ENCODE measurements at regions of chr7 and their contacts with region 1.

Region 1: DNA sequence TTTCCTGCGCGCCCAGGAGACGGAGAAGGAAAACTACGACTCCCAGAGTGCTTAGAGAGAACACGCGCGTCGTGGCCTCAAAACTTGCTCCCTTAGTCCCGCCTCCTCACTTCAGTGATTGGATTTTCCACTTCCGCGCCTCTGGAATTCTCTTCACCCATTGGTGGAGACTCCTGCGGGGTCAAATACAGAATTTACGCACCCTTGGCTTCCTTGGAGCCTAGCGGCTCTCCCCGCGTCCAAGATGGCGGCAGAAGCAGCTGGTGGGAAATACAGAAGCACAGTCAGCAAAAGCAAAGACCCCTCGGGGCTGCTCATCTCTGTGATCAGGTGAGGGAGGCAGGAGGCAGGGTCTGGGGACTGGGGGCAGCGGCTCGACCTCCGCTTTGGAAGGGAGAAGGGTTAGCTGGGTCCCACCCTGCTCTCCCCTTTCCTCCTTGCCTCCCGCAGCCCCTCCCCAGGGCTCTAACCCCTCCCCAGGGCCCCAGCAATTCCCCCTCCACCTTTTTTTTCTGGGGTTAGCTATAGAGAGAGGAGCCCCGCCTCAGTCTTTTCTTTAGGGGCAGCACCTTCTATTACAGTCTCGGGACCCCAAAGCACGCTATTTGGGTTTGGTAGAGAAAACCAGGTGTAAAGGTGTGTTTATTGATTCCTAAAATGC is at the start of gene EXOC4:
- DNase-seq: peak; percentile 85 to 99 (median 92)

Region 2: DNA sequence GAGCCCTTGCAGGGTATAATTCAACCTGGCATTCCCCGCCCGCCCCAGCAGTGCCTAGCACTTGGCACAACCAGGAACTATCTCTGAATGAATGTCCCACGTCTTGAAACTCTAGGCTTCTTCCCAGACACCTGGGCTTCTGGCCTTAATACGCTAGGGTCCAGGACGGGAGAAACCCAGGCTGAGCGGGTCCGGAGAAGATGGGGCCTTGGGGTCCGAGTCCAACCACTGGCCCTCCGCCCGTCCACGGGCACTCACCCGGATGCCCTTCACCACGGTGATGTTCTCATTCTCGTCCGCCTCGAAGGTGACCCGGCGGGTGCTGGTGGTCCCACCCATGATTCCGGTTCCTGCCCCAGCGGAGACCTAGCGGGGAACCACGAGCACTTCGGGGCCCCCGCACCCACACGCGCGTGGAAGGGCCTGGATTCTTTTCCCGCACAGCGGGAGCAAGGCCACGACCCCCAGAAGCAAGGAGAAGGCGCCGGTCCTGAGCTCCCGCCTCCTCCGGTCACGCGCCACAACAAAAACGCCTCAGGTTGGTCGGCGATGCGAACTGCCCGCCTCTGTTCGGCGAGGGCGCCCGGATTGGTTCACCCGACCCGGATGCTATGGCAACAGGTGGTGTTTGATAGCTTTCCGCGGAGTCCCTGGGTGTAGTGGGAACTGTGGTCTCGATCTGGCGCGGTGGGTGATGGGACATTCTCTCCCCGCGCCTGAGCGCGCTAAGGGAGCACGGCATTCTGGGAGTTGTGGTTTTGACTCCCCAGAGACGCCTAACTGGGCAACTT is 171.2 kb before region 1 on chr7 and contains the start of gene CHCHD3:
- intact Hi-C with region 1: loop called (anchors 1 kb)
- DNase-seq: peak; percentile 99 to 100 (median 99)

Region 3: DNA sequence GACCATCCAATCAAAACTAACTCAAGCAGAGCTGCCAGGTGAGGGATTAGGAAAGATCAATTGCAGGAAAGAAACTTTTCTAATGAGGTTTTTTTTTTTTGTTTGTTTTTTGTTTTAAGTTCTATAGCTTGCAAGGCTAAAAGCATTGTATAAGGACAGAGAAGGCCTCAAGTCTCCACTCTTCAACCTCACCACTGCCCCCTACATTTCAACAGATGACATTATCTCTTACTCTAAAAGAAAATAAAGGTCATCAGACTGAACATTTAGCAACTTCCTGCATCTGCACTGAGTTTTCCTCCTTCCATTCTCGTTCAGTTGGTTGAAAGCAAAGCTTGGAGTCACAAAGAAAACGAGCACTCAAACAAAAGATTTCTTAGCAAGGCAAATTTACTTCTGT is 45.3 kb before region 1 on chr7:
- intact Hi-C with region 1: no loop called
- DNase-seq: no peak

Region 4: DNA sequence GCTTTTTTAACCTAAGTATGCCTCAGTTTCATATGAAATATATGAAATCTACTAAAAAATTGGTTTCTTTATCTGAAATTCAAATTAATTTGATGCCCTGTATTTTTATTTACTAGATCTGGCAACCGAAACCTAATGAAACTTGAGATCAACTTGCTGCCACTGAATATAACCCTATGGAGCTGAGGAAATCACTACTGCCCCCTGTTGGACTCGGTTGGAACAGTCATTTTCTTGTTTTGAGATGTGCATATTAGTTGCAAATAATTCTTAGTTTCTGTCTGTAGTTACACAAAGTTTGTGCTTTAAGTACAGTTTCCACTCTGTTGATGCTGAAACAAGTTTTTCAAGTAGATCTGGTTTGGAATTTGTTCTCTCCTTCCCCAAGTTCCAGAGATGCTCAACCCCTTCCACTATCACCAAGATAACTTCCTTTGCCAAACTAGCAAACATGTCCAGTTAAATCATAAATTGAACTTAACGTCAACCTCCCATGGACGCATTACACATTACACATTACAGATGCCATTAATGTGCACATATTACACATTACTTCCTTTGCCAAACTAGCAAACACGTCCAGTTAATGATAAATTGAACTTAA is 22.3 kb before region 1 on chr7:
- intact Hi-C with region 1: no loop called
- DNase-seq: peak in 4 of 10 donors; percentile 41 to 52 (median 46)

Region 5: DNA sequence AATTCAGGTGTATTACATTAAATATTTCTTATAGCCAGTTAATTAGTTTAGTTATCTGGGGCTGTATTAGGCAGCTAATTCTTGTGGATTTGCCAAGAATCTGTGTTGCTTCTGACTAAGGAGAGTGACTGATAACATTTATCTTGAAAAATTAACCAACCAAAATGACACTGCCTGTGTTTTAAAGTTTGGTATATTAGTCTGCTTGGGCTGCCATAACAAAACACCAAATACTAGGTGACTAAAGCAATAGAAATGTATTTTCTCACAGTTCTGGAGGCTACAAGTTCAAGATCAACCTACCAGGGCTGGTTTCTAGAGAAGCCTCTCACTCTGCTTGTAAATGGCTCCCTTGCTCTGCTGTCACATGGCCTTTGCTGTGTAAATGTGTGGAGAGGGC is 12.8 kb after region 1 on chr7:
- intact Hi-C with region 1: no loop called
- DNase-seq: no peak

Region 6: GRCh38 chr7:134316539-134317344 is 1063.8 kb after region 1 on chr7 and contains the start of gene SLC35B4:
- intact Hi-C with region 1: loop called (anchors 10 kb)
- DNase-seq: peak; percentile 95 to 100 (median 98)